HEK293T (cell line): ENCODE measurements at regions of chrX and their contacts with region 1.

Region 1: GRCh38 chrX:152641996-152642395 is 4.3 kb downstream of the GABRQ start:
- DNase-seq: peak; percentile 44

Region 2: GRCh38 chrX:152537373-152537772 is 104.6 kb before region 1 on chrX:
- CTCF ChIA-PET with region 1: no interaction called
- POLR2A ChIA-PET with region 1: no interaction called
- DNase-seq: peak; percentile 9

Region 3: GRCh38 chrX:152821145-152821765 is 179.3 kb after region 1 on chrX:
- CTCF ChIA-PET with region 1: interaction called, 17 read pairs
- POLR2A ChIA-PET with region 1: no interaction called
- DNase-seq: peak; percentile 75